SK-N-SH (cell line): ENCODE measurements at regions of chr17 and their contacts with region 1.

Region 1: DNA sequence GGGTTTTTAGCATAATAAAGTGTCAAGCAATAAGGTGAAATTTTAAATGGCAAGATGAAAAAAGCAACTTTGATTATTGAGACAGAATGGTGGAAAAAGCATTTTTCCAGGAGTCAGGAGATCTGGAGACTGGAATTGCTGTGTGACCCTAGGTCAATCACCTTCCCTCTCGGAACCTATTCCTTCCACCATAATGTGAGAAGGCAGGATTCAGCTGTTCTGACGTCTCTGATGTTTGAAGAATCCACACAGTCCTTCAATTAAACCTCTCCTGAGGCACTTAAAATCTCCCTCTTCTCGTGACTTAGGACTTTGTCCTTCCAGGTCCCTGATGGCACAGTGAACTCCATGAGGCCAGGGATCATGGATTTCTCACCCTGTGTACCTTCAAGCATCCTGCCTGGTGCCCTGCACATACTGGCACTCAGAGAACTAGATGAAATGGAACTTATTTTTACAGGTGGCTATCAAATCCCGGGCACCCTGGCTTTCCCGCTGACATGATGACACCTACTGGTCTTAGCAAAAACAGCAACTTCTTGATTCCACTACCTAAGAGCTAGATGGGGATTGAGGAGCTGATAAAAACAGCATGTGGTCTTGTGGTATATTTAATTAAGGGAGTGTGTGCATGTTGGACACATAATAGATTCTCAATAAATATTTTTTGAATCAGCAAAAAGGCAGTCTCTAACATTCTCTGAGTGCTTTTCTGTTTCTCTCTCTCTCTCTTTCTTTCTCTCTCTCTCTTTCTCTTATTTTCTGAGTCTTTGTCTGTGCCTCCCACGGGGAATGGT is 2.3 kb upstream of the CCDC182 start:
- DNase-seq: peak; percentile 89
- H3K4me3 ChIP-seq: no peak overlapping the region
- H3K27ac ChIP-seq: peak overlapping the region in 1 of 2 experiments; percentile 85; a peak in 2 of 4 replicates
- H3K4me1 ChIP-seq: peaks cover 0 to 40% of the 10 kb centered on the region in 2 experiments; a peak in 2 of 4 replicates
- H3K27me3 ChIP-seq: peaks cover 18% of the 10 kb centered on the region; the same call in 1 of the 2 replicates
- CTCF ChIP-seq: peak; percentile 99
- EP300 ChIP-seq: peak in 1 of 2 experiments; percentile 64; a peak in 1 of 4 replicates
- RAD21 ChIP-seq: peak; percentile 100

Region 2: GRCh38 chr17:57121338-57122042 is 625.9 kb before region 1 on chr17:
- CTCF ChIA-PET with region 1: interaction called, 10 read pairs
- POLR2A ChIA-PET with region 1: no interaction called
- DNase-seq: peak; percentile 80
- H3K4me3 ChIP-seq: no peak overlapping the region
- H3K27ac ChIP-seq: peak overlapping the region in 1 of 2 experiments; percentile 29; a peak in 1 of 4 replicates
- H3K4me1 ChIP-seq: peaks cover 0 to 17% of the 10 kb centered on the region in 2 experiments; a peak in 1 of 4 replicates
- H3K27me3 ChIP-seq: no peaks in the 10 kb centered on the region
- CTCF ChIP-seq: peak; percentile 73
- EP300 ChIP-seq: no peak
- RAD21 ChIP-seq: peak; percentile 76

Region 3: DNA sequence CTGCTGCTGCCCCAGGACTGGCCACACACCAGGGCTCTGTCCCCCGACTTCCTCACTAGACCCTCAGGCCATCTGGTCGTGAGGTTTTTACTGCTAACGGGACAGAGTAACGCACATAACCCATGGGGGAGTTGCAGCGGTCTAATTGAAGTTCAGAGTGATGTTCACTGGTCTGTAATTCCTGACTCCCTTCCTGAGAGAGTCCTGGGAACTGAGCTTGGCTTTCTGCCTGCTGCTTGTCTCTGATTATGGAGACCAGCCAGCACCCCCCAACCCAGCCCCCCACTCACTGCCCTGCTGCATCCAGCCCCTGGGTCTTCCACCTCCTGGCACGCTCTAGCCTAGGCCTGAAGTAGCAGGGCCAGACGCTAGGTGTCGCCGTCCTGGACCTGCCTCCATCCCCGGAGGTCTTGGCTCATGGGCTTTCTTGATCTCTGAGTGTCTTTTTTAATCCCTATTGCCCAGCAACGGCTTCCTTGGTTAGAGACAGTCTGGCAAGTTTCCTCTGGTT is 195.2 kb before region 1 on chr17:
- CTCF ChIA-PET with region 1: interaction called, 10 read pairs
- POLR2A ChIA-PET with region 1: no interaction called
- DNase-seq: peak; percentile 84
- H3K4me3 ChIP-seq: no peak overlapping the region
- H3K27ac ChIP-seq: peak overlapping the region in 1 of 2 experiments; percentile 99; a peak in 2 of 4 replicates
- H3K4me1 ChIP-seq: peaks cover 6 to 86% of the 10 kb centered on the region in 2 experiments; a peak in 2 of 4 replicates
- H3K27me3 ChIP-seq: no peaks in the 10 kb centered on the region
- CTCF ChIP-seq: peak; percentile 52
- EP300 ChIP-seq: peak in 1 of 2 experiments; percentile 61; a peak in 1 of 4 replicates
- RAD21 ChIP-seq: peak; percentile 65

Region 4: GRCh38 chr17:57604771-57605674 is 142.4 kb before region 1 on chr17:
- CTCF ChIA-PET with region 1: interaction called, 117 read pairs
- POLR2A ChIA-PET with region 1: interaction called, 6 read pairs
- DNase-seq: peak; percentile 89
- H3K4me3 ChIP-seq: peak overlapping the region in 1 of 2 experiments; percentile 18; a peak in 1 of 4 replicates
- H3K27ac ChIP-seq: peak overlapping the region; percentile 59 to 99; a peak in 3 of 4 replicates
- H3K4me1 ChIP-seq: peaks cover 26 to 90% of the 10 kb centered on the region in 2 experiments
- H3K27me3 ChIP-seq: no peaks in the 10 kb centered on the region
- CTCF ChIP-seq: no peak; the same call in 1 of the 2 replicates
- EP300 ChIP-seq: peak in 1 of 2 experiments; percentile 51; a peak in 2 of 4 replicates
- RAD21 ChIP-seq: peak; percentile 56

Region 5: GRCh38 chr17:57677301-57678257 is 69.8 kb before region 1 on chr17:
- CTCF ChIA-PET with region 1: interaction called, 45 read pairs
- POLR2A ChIA-PET with region 1: interaction called, 3 read pairs
- DNase-seq: no peak
- H3K4me3 ChIP-seq: no peak overlapping the region
- H3K27ac ChIP-seq: peak overlapping the region in 1 of 2 experiments; percentile 56; a peak in 2 of 4 replicates
- H3K4me1 ChIP-seq: peaks cover under 1 to 41% of the 10 kb centered on the region in 2 experiments; a peak in 2 of 4 replicates
- H3K27me3 ChIP-seq: no peaks in the 10 kb centered on the region
- CTCF ChIP-seq: no peak
- EP300 ChIP-seq: no peak
- RAD21 ChIP-seq: no peak

Region 6: GRCh38 chr17:57697891-57698711 is 49.3 kb before region 1 on chr17:
- CTCF ChIA-PET with region 1: interaction called, 11 read pairs
- POLR2A ChIA-PET with region 1: no interaction called
- DNase-seq: no peak
- H3K4me3 ChIP-seq: no peak overlapping the region
- H3K27ac ChIP-seq: no peak overlapping the region; a peak in 1 of 4 replicates
- H3K4me1 ChIP-seq: peaks cover 0 to 22% of the 10 kb centered on the region in 2 experiments; a peak in 2 of 4 replicates
- H3K27me3 ChIP-seq: no peaks in the 10 kb centered on the region
- CTCF ChIP-seq: no peak
- EP300 ChIP-seq: no peak
- RAD21 ChIP-seq: no peak

Region 7: GRCh38 chr17:57842280-57842679 is 94.9 kb after region 1 on chr17:
- CTCF ChIA-PET with region 1: no interaction called
- POLR2A ChIA-PET with region 1: no interaction called
- DNase-seq: no peak
- H3K4me3 ChIP-seq: no peak overlapping the region
- H3K27ac ChIP-seq: no peak overlapping the region
- H3K4me1 ChIP-seq: no peaks in the 10 kb centered on the region
- H3K27me3 ChIP-seq: no peaks in the 10 kb centered on the region
- CTCF ChIP-seq: no peak
- EP300 ChIP-seq: no peak
- RAD21 ChIP-seq: no peak